Breast epithelium (tissue), 4 donors: ENCODE measurements at regions of chr2 and their contacts with region 1.

Region 1: DNA sequence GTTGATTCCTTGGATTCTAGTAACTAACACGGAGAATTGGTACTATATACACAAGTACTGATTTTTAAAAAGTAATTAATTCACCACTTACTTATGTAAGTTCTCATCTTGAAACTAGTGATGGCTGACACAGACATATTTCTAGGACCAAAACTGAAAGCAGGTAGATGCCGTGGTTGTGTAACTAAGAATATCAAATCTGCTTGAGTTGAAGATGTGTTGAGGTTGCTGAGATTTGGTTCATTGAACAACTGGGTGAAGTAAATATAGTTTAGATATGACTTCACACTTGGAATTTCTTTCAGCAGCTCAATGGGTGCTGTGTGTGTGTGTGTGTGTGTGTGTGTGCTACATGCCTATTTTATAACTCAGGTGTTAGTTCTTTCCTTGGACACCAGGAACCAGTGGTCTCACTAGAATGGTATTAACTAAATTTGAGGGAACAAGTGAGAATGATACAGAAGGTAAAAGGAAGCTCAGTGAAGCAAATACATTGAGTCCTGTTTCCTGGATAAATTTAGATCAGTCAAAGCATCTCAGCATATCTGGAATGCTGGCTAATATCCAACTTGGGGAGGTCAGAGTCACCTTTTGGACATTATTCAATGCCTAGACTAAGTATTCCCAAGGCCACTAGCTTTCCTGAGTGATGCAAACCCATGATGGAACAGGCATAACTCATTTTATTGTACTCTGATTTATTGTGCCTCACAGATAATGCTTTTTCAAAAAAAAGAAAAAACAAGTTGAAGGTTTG is 110.7 kb upstream of the ZEB2 start:
- DNase-seq: no peak
- H3K4me3 ChIP-seq: no peak overlapping the region
- H3K27ac ChIP-seq: no peak overlapping the region
- H3K4me1 ChIP-seq: no peaks in the 10 kb centered on the region
- H3K27me3 ChIP-seq: no peaks in the 10 kb centered on the region
- CTCF ChIP-seq: no peak
- POLR2A ChIP-seq: no peak

Region 2: GRCh38 chr2:143852759-143853158 is 777.9 kb before region 1 on chr2:
- intact Hi-C with region 1: no loop called
- DNase-seq: no peak
- H3K4me3 ChIP-seq: no peak overlapping the region
- H3K27ac ChIP-seq: no peak overlapping the region
- H3K4me1 ChIP-seq: no peaks in the 10 kb centered on the region
- H3K27me3 ChIP-seq: no peaks in the 10 kb centered on the region
- CTCF ChIP-seq: no peak
- POLR2A ChIP-seq: no peak

Region 3: GRCh38 chr2:144067506-144067905 is 563.1 kb before region 1 on chr2:
- intact Hi-C with region 1: loop called (anchors 5 kb)
- DNase-seq: no peak
- H3K4me3 ChIP-seq: no peak overlapping the region
- H3K27ac ChIP-seq: no peak overlapping the region
- H3K4me1 ChIP-seq: no peaks in the 10 kb centered on the region
- H3K27me3 ChIP-seq: no peaks in the 10 kb centered on the region
- CTCF ChIP-seq: no peak
- POLR2A ChIP-seq: no peak